GM10248 (cell line): ENCODE measurements at regions of chr6 and their contacts with region 1.

Region 1: GRCh38 chr6:150905769-150906506 is 40.4 kb downstream of the MTHFD1L start:
- DNase-seq: no peak
- CTCF ChIP-seq: peak; percentile 17

Region 2: GRCh38 chr6:150622941-150623874 is 282.7 kb before region 1 on chr6:
- CTCF ChIA-PET with region 1: no interaction called
- POLR2A ChIA-PET with region 1: no interaction called
- DNase-seq: peak; percentile 72
- CTCF ChIP-seq: no peak

Region 3: GRCh38 chr6:150922137-150922536 is 16.2 kb after region 1 on chr6:
- CTCF ChIA-PET with region 1: interaction called, 10 read pairs
- POLR2A ChIA-PET with region 1: interaction called, 5 read pairs
- DNase-seq: no peak
- CTCF ChIP-seq: no peak

Region 4: DNA sequence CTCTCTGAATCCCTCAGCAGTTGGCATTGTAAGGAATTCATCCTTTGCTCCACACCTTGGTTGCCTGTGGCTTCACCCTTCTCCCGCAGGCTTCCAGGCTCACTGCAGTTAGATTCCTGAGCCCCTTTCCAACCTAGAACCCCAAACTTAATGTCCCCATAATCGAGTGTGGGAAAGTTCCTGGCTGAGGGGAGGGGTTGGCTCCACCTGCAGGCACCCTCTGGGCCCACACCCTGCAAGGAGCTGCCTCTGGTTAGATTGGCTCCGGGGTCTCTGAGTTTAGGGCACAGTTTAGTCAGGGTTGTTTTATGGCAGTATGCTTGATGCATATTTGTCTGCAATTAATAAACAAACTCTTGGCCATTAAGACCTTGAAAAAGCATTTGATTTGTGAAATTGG is 22.9 kb after region 1 on chr6:
- CTCF ChIA-PET with region 1: interaction called, 11 read pairs
- POLR2A ChIA-PET with region 1: no interaction called
- DNase-seq: peak; percentile 39
- CTCF ChIP-seq: peak; percentile 53